ENCODE measurements at regions of chr3 and their contacts with region 1.

Region 1: DNA sequence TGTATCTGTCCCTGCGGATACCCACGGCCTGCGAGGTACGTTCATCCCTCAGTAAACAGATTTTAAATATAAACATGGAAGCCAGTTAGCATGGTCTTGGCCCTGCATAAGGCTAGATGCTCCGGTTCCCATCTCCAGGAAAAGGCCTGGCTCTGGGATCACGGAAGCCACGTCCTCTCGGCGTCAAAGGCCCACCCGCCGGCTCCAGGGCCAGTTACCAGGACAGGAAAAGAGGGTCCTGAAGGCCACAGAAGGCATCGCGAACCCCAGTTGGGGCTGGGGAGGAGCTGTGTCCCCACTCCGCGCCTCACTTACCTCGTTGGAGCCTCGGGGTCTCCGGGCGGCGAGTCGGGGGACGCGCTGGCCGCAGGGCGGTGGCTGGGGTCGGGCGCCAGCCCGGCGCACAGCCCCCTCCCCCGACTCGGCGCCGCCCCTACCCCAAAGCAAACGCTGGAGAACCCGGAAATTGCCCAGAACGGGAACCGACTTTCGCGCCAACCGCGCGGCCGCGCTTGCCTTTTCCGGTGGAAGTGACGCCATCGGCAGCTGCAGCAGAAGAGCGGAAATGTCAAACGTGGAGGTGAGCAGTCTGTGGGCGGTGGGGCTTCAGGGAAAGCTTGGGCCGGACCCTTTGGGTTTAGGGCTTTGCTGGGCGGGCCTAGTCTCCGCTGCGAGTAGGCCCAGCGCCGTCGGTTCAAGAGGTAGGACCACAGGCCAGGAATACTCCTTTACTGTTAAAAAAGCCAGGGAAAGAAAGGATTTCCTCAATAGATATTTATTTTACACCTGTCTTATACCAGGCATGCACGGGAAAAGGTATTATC is at the start of gene TOPBP1:
- DNase-seq: peak; percentile 66 to 90 (median 82)
- H3K4me3 ChIP-seq: peak within 1 kb of the TSS; percentile 59 to 95 (median 83)
- H3K27ac ChIP-seq: peak within 1 kb of the TSS in 57 of 59 donors; percentile 11 to 93 (median 77)
- H3K27me3 ChIP-seq: no peaks in the 10 kb centered on the region
- CTCF ChIP-seq: peak in 2 of 56 donors; percentile 30 to 32
- total RNA-seq, gene TOPBP1: 12.6 to 36.3 (median 25.5) TPM

Region 2: DNA sequence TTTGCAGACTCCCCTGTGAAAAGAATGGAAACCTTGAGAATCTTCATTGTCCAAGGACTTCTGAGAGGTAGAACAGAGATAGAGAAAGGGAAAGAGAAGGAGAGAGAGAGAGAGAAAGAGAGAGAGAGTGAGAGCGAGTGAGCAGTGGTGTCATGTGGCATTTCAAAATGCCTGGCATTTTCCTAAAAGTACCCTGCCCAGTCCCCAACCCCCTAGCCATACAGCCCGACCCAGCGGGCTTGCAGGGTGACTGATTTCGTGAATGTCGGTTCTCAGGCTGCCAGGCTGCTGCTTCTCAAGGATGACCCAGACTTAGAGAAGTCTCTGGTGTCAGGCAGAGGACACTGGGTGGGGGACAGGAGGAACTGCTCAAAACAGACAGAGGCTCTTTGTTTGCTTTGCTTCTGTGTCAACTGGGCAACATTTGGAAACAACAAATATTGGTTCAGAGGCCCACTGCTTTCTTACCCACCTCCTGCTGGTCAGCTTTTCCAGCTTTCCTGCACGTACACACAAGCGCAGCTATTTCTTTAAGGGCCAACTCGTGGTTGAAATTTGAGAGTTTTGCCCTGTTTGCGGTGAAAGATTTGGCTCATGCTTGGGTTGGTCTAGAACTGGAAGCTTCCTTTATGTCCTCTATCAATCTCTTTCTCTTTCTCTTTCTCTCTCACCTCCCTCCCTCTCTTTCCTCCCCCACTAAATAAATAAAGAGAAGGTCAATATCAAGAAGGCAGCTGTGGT is 80.9 kb after region 1 on chr3:
- intact Hi-C with region 1: loop called (anchors 5 kb)
- DNase-seq: no peak
- H3K4me3 ChIP-seq: peak overlapping the region in 25 of 59 donors; percentile 0 to 49 (median 19)
- H3K27ac ChIP-seq: peak overlapping the region; percentile 30 to 100 (median 98)
- H3K27me3 ChIP-seq: no peaks in the 10 kb centered on the region
- CTCF ChIP-seq: peak in 6 of 56 donors; percentile 5 to 38 (median 18)

Region 3: GRCh38 chr3:133805527-133806475 is 144.1 kb after region 1 on chr3 and contains the start of gene SRPRB:
- intact Hi-C with region 1: loop called in 1 of 2 experiments (anchors 10 kb)
- DNase-seq: peak; percentile 93 to 97 (median 96)
- H3K4me3 ChIP-seq: peak within 1 kb of the TSS; percentile 58 to 98 (median 91)
- H3K27ac ChIP-seq: peak within 1 kb of the TSS in 38 of 59 donors; percentile 8 to 84 (median 56)
- H3K27me3 ChIP-seq: no peaks in the 10 kb centered on the region
- CTCF ChIP-seq: peak in 36 of 56 donors; percentile 6 to 66 (median 34)
- total RNA-seq, gene SRPRB: 22.8 to 66.1 (median 40.5) TPM

Region 4: DNA sequence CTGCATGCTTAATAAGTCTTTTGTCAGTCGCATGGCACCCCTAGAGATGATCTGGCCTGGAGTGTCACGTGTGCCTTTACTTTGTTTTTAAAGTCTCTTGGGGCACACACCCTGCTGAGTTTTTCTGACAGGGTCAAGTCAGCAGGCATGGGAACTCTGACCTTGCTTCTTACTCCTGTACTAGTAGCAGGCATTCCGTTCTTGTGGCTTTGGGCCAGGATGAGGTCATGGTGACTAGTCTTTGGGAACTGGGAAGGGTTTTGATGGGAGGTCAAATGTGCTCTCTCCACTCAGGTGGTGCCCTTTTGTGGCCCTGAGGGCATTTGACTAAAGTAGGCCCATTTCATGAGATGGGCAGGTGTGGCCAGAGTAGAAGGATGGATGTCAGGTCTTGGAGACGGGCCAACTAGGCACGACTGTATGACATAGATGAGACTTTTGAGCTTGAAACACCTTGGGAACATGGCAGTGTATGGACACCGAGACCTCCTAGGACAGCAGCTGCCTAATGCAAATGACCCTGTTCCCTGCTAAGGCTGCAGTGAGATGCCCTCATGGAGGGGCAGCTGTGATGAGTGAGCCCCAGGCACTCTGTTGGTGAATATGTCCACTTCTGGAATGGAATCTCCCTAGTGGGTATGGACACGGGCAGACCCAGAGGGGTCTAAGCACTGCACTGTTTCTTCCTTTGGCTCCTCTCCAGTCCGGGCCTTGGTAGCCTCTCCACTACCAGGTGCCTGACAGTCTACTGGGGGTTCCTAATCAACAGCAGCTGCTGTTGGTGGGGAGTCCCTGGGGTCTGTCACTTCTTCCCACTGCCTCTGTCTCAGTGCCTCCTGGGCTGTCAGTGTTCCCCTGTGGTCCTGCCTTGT is 160.3 kb after region 1 on chr3:
- intact Hi-C with region 1: loop called in 1 of 2 experiments (anchors 5 kb)
- DNase-seq: peak in 2 of 10 donors; percentile 35 to 55
- H3K4me3 ChIP-seq: no peak overlapping the region
- H3K27ac ChIP-seq: peak overlapping the region in 8 of 59 donors; percentile 5 to 41 (median 20)
- H3K27me3 ChIP-seq: no peaks in the 10 kb centered on the region
- CTCF ChIP-seq: peak in 13 of 56 donors; percentile 16 to 51 (median 36)

Region 5: GRCh38 chr3:133927540-133928066 is 265.9 kb after region 1 on chr3:
- intact Hi-C with region 1: loop called (anchors 5 to 10 kb)
- DNase-seq: peak in 4 of 10 donors; percentile 39 to 76 (median 58)
- H3K4me3 ChIP-seq: peak overlapping the region; percentile 36 to 77 (median 64)
- H3K27ac ChIP-seq: peak overlapping the region in 10 of 59 donors; percentile 1 to 75 (median 28)
- H3K27me3 ChIP-seq: no peaks in the 10 kb centered on the region
- CTCF ChIP-seq: peak in 55 of 56 donors; percentile 46 to 98 (median 75)